Endothelial cell of umbilical vein (primary cell): ENCODE measurements at regions of chr6 and their contacts with region 1.

Region 1: GRCh38 chr6:15245361-15246216 is at the start of gene JARID2:
- DNase-seq: peak; percentile 97
- H3K4me3 ChIP-seq: peak within 1 kb of the TSS; percentile 63 to 96 (median 94)
- H3K27ac ChIP-seq: peak within 1 kb of the TSS; percentile 70
- H3K4me1 ChIP-seq: peaks cover 30% of the 10 kb centered on the region
- H3K27me3 ChIP-seq: no peaks in the 10 kb centered on the region
- CTCF ChIP-seq: no peak
- POLR2A ChIP-seq: peak; percentile 34
- total RNA-seq, gene JARID2: 8.8 and 10.6 TPM in 2 replicates

Region 2: DNA sequence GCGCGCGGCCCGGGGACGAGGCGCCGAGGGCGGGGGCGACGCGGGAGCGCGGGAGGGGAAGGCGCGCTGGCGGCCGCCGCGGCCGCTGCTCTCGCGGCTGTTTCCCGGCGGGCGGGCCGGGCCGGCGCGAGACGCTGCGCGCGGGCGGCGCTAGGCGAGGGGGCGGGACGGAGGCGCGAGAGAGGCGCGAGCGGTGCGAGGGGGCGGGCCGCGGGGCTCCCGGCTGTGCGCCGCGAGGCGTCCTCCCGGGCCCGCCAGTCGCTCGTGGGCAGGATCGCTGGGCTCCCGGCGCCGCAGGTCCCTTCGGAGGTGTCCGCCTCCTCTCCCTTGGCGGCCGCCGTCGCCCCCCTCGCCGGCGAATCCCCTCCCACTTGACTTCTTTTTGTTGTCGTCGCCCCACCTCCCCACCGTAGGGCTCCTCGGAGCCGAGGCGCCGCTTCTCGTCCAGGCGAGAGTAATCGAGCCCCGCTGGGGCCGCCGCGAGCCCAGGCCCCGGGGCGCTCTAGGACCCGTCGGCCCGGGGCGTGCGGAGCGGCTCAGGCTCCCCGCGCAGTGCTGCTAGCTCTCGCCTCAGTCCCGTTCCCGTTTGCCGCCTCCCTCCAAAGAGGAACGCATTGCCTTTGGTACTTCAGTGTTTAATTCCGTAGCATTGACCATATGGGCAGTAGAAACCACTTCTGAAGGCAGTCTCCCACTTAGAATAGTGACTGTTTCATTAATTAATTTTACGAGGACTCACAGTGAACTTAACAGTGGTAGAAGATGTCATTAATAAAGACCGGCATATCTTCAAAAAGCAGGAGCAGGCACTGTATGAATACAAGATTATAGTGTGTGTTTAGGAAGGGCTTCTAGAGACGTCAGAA is 1533.6 kb before region 1 on chr6 and contains the start of gene RANBP9:
- CTCF ChIA-PET with region 1: no interaction called
- POLR2A ChIA-PET with region 1: no interaction called
- dilution Hi-C with region 1: no loop called
- intact Hi-C with region 1: loop called (anchors 5 kb)
- DNase-seq: peak; percentile 90
- H3K4me3 ChIP-seq: peak within 1 kb of the TSS; percentile 79 to 99 (median 95)
- H3K27ac ChIP-seq: peak within 1 kb of the TSS; percentile 74
- H3K4me1 ChIP-seq: peaks cover 25% of the 10 kb centered on the region
- H3K27me3 ChIP-seq: no peaks in the 10 kb centered on the region
- CTCF ChIP-seq: no peak
- POLR2A ChIP-seq: peak; percentile 75
- total RNA-seq, gene RANBP9: 40.2 and 44.4 TPM in 2 replicates

Region 3: DNA sequence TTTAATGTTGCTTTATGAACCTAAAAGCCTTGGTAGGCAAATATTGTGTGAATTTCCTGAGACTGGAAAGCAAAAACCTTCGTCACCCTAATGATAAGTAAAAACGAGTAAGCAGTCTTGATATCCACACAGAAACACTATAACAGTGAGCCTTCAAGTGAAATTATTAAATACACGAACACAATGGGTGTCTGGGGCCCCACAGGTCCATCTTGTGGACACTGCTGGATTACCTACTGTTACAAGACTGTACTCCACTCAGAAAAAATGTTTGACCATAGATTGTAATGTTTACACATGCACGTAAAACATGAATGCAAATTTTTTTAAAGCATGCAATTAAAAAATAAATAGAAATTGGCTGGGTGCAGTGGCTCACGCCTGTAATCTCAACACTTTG is 661.1 kb before region 1 on chr6:
- CTCF ChIA-PET with region 1: no interaction called
- POLR2A ChIA-PET with region 1: no interaction called
- dilution Hi-C with region 1: no loop called
- intact Hi-C with region 1: no loop called
- DNase-seq: no peak
- H3K4me3 ChIP-seq: no peak overlapping the region
- H3K27ac ChIP-seq: no peak overlapping the region
- H3K4me1 ChIP-seq: no peaks in the 10 kb centered on the region
- H3K27me3 ChIP-seq: no peaks in the 10 kb centered on the region
- CTCF ChIP-seq: no peak
- POLR2A ChIP-seq: no peak

Region 4: DNA sequence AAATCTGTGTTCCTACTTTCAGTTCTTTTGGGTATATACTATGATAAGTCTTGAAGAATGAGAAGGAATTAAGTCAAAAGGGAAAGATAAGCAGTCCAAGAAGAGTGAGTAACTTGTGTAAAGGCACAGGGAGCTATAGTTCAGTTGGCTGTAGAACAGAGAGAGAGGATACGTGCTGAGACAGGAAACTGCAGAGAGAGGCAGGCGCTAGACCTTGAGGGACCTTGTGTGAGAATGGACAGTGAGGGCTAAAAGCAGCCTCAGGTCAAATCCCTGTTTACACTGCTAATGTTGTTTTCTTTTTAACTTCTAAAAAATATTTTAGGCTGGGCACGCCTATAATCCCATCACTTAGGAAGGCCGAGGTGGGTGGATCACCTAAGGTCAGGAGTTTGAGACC is 66.3 kb before region 1 on chr6:
- CTCF ChIA-PET with region 1: no interaction called
- POLR2A ChIA-PET with region 1: no interaction called
- dilution Hi-C with region 1: no loop called
- intact Hi-C with region 1: no loop called
- DNase-seq: no peak
- H3K4me3 ChIP-seq: no peak overlapping the region
- H3K27ac ChIP-seq: no peak overlapping the region
- H3K4me1 ChIP-seq: no peaks in the 10 kb centered on the region
- H3K27me3 ChIP-seq: no peaks in the 10 kb centered on the region
- CTCF ChIP-seq: no peak
- POLR2A ChIP-seq: no peak

Region 5: GRCh38 chr6:15264902-15265761 is 19.5 kb after region 1 on chr6:
- CTCF ChIA-PET with region 1: interaction called, 15 read pairs
- POLR2A ChIA-PET with region 1: no interaction called
- dilution Hi-C with region 1: no loop called
- intact Hi-C with region 1: loop called (anchors 1 kb)
- DNase-seq: no peak
- H3K4me3 ChIP-seq: no peak overlapping the region
- H3K27ac ChIP-seq: peak overlapping the region; percentile 67
- H3K4me1 ChIP-seq: peaks cover 29% of the 10 kb centered on the region
- H3K27me3 ChIP-seq: no peaks in the 10 kb centered on the region
- CTCF ChIP-seq: no peak
- POLR2A ChIP-seq: no peak

Region 6: GRCh38 chr6:15327271-15327670 is 81.7 kb after region 1 on chr6:
- CTCF ChIA-PET with region 1: no interaction called
- POLR2A ChIA-PET with region 1: no interaction called
- dilution Hi-C with region 1: no loop called
- intact Hi-C with region 1: no loop called
- DNase-seq: no peak
- H3K4me3 ChIP-seq: no peak overlapping the region
- H3K27ac ChIP-seq: no peak overlapping the region
- H3K4me1 ChIP-seq: peaks cover 4% of the 10 kb centered on the region
- H3K27me3 ChIP-seq: no peaks in the 10 kb centered on the region
- CTCF ChIP-seq: no peak
- POLR2A ChIP-seq: no peak

Region 7: GRCh38 chr6:15389765-15390723 is 144.5 kb after region 1 on chr6:
- CTCF ChIA-PET with region 1: interaction called, 7 read pairs
- POLR2A ChIA-PET with region 1: no interaction called
- dilution Hi-C with region 1: no loop called
- intact Hi-C with region 1: loop called (anchors 1 kb)
- DNase-seq: peak; percentile 73
- H3K4me3 ChIP-seq: no peak overlapping the region
- H3K27ac ChIP-seq: no peak overlapping the region
- H3K4me1 ChIP-seq: no peaks in the 10 kb centered on the region
- H3K27me3 ChIP-seq: no peaks in the 10 kb centered on the region
- CTCF ChIP-seq: peak; percentile 60 to 71
- POLR2A ChIP-seq: no peak

Region 8: DNA sequence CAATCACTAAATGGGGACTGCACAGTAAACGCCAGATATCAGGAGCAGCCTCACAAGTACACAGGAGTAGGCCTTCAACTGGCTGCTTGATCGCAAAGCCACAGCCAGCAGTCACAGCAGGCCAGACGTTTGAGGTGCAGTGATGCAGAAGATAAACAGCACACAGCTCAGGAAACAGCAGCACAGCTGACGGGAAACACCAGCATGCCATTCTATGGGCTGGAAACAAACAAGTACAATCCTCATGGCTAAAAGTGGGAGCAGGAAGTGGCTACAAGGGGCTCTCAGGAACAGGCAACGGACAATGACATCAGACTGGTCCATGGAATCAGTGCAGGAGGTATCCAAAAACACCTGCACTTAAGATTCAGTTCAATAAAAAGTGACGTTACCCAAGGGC is 306.2 kb after region 1 on chr6:
- CTCF ChIA-PET with region 1: no interaction called
- POLR2A ChIA-PET with region 1: no interaction called
- dilution Hi-C with region 1: no loop called
- intact Hi-C with region 1: loop called (anchors 5 kb)
- DNase-seq: peak; percentile 92
- H3K4me3 ChIP-seq: no peak overlapping the region
- H3K27ac ChIP-seq: peak overlapping the region; percentile 62
- H3K4me1 ChIP-seq: peaks cover 42% of the 10 kb centered on the region
- H3K27me3 ChIP-seq: no peaks in the 10 kb centered on the region
- CTCF ChIP-seq: no peak
- POLR2A ChIP-seq: no peak

Region 9: GRCh38 chr6:16238057-16238962 is 992.7 kb after region 1 on chr6 and contains the start of gene GMPR:
- CTCF ChIA-PET with region 1: no interaction called
- POLR2A ChIA-PET with region 1: no interaction called
- dilution Hi-C with region 1: no loop called
- intact Hi-C with region 1: loop called (anchors 5 kb)
- DNase-seq: peak; percentile 81
- H3K4me3 ChIP-seq: peak within 1 kb of the TSS; percentile 63 to 97 (median 73)
- H3K27ac ChIP-seq: peak within 1 kb of the TSS; percentile 75
- H3K4me1 ChIP-seq: peaks cover 32% of the 10 kb centered on the region
- H3K27me3 ChIP-seq: no peaks in the 10 kb centered on the region
- CTCF ChIP-seq: no peak
- POLR2A ChIP-seq: no peak
- total RNA-seq, gene GMPR: 36.3 and 43.2 TPM in 2 replicates